ENCODE measurements at regions of chr22 and their contacts with region 1.

Region 1: DNA sequence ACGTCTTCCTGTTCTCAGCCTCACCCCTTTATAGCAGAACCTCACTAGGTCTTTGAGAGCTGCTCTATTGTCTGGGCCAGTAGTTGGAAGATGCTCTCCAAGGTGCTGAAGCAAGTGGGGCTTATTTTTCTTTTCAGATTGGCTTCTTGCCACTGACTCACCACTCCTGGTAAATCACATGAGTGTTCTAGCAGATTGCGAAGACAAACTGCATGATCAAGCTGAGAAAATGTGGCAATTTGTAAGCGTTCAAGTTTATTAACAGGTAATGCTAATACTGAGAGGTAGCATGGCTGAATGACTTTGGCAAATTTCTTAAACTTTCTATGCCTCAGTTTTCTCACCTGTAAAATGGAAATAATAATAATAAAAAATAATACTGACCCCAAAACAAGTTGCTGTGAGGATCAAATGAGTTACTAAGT is 59.2 kb downstream of the CACNG2 start:
- DNase-seq: peak; percentile 95
- H3K4me3 Mint-ChIP-seq: no peak overlapping the region
- H3K27ac Mint-ChIP-seq: no peak overlapping the region
- H3K4me1 Mint-ChIP-seq: peaks cover 19% of the 10 kb centered on the region
- H3K27me3 Mint-ChIP-seq: peaks cover 75% of the 10 kb centered on the region
- CTCF ChIP-seq: no peak

Region 2: DNA sequence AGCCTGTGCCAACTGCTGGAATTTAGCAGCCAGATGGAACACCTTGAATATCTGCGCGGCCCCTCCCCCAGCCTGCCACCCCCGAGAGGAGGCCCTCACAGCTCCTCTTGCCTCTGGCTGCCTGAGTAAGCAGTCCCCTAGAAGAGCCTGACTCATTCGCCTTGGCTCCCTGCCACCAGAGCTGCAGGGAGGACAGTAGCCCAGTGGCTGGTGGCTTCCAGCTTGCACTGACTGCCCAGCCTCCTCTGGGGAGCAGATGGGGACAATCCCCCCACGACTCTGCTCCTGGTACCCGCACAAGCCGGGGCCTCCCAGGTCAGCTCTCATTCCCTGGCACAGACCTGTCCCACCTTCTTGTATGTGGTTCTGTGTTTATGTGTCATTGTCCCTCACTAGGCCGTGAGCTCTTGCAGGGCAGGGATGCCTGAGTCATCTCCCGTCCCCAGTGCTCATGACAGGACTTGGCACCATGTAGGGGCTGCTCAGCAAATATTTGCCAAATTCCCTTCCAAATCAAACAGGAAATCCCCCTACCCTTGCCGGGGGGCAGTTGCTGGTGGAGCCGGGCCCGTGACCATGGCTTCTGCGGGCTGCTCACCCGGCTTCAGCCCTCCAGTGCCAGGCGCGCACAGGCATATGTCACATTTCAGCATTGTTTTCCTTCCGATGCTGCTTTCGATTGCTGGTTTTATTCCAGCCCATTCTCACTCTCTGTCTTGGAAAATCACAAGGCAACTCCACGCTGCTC is 15.6 kb after region 1 on chr22:
- CTCF ChIA-PET with region 1: no interaction called
- POLR2A ChIA-PET with region 1: interaction called, 15 read pairs
- intact Hi-C with region 1: no loop called
- DNase-seq: peak; percentile 99
- H3K4me3 Mint-ChIP-seq: peak overlapping the region; percentile 52
- H3K27ac Mint-ChIP-seq: peak overlapping the region; percentile 54
- H3K4me1 Mint-ChIP-seq: peaks cover 29% of the 10 kb centered on the region
- H3K27me3 Mint-ChIP-seq: peaks cover 4% of the 10 kb centered on the region
- CTCF ChIP-seq: no peak

Region 3: GRCh38 chr22:36684841-36685240 is 40.5 kb after region 1 on chr22:
- CTCF ChIA-PET with region 1: no interaction called
- POLR2A ChIA-PET with region 1: no interaction called
- intact Hi-C with region 1: no loop called
- DNase-seq: no peak
- H3K4me3 Mint-ChIP-seq: no peak overlapping the region
- H3K27ac Mint-ChIP-seq: no peak overlapping the region
- H3K4me1 Mint-ChIP-seq: no peaks in the 10 kb centered on the region
- H3K27me3 Mint-ChIP-seq: peaks cover 41% of the 10 kb centered on the region
- CTCF ChIP-seq: no peak

Region 4: GRCh38 chr22:36702842-36703215 is 58.5 kb after region 1 on chr22:
- CTCF ChIA-PET with region 1: no interaction called
- POLR2A ChIA-PET with region 1: interaction called, 4 read pairs
- intact Hi-C with region 1: loop called (anchors 1 kb)
- DNase-seq: no peak
- H3K4me3 Mint-ChIP-seq: no peak overlapping the region
- H3K27ac Mint-ChIP-seq: no peak overlapping the region
- H3K4me1 Mint-ChIP-seq: no peaks in the 10 kb centered on the region
- H3K27me3 Mint-ChIP-seq: peaks cover 94% of the 10 kb centered on the region
- CTCF ChIP-seq: no peak

Region 5: DNA sequence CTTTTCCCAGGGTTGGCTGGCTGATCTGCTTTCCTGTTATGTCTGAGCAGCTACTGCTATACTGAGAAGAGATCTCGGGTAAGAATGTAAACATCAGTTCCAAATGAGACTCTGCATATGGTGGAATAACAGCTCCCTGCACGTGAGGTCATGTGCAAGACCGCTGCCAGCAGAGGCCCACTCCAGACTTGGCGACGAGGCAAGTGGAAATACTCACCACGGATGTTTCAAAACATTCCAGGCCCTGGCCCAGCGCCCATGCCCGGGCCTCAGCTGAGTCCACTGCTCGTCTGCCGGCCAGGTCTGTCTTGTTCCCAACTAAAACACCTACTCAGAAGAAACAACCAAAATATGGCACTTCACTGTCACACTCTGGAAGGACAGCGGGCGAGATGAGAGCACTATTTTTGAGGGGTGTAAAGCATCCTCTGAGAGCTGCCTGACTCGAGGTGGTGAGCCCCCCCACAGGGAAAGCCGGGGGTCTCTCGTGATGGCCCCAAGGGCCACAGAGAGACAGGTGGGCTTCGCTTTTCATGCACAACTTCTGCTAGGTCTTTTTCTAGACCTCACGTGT is 118.4 kb after region 1 on chr22:
- CTCF ChIA-PET with region 1: no interaction called
- POLR2A ChIA-PET with region 1: interaction called, 10 read pairs
- intact Hi-C with region 1: loop called (anchors 5 kb)
- DNase-seq: peak; percentile 54
- H3K4me3 Mint-ChIP-seq: peak overlapping the region; percentile 12
- H3K27ac Mint-ChIP-seq: peak overlapping the region; percentile 52
- H3K4me1 Mint-ChIP-seq: peaks cover 29% of the 10 kb centered on the region
- H3K27me3 Mint-ChIP-seq: no peaks in the 10 kb centered on the region
- CTCF ChIP-seq: no peak

Region 6: GRCh38 chr22:36901411-36902142 is 257.2 kb after region 1 on chr22:
- CTCF ChIA-PET with region 1: no interaction called
- POLR2A ChIA-PET with region 1: no interaction called
- intact Hi-C with region 1: no loop called
- DNase-seq: no peak
- H3K4me3 Mint-ChIP-seq: no peak overlapping the region
- H3K27ac Mint-ChIP-seq: no peak overlapping the region
- H3K4me1 Mint-ChIP-seq: no peaks in the 10 kb centered on the region
- H3K27me3 Mint-ChIP-seq: peaks cover 71% of the 10 kb centered on the region
- CTCF ChIP-seq: no peak